Naive thymus-derived CD4-positive, alpha-beta T cell (primary cell): ENCODE measurements at regions of chr19 and their contacts with region 1.

Region 1: GRCh38 chr19:18521885-18522624 is at the start of gene ELL:
- DNase-seq: peak; percentile 99 to 100 (median 100)
- ATAC-seq: peak; percentile 92
- H3K4me3 ChIP-seq: peak within 1 kb of the TSS; percentile 89
- H3K4me3 Mint-ChIP-seq: peak within 1 kb of the TSS; percentile 87 to 99 (median 94)
- H3K27ac ChIP-seq: peak within 1 kb of the TSS; percentile 94
- H3K27ac Mint-ChIP-seq: peak within 1 kb of the TSS; percentile 89 to 98 (median 95)
- H3K4me1 ChIP-seq: peaks cover 5 to 10% of the 10 kb centered on the region in 2 donors
- H3K4me1 Mint-ChIP-seq: peaks cover 0 to 24% (median 17%) of the 10 kb centered on the region in 7 donors
- H3K27me3 ChIP-seq: no peaks in the 10 kb centered on the region
- H3K27me3 Mint-ChIP-seq: no peaks in the 10 kb centered on the region
- total RNA-seq, gene ELL: 18.9 to 70.4 (median 25.0) TPM

Region 2: DNA sequence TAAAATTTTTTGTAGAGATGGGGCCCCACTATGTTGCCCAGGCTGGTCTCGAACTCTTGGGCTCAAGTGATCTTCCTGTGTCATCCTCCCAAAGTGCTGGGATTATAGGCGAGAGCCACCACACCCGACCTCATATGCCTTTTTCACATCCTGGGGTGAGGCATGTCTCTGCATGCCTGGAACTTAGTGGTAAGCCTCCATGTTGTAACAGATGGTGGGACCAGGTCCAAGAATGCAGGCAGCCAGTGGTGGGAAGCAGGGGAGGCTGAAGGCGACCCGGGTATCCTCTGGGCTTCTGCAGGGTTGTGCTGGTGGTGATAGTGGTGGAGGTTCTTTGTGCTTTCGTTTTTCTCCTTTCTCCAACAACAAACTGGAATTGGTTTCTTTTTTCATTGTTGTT is 619.4 kb before region 1 on chr19:
- CTCF ChIA-PET with region 1: no interaction called
- POLR2A ChIA-PET with region 1: no interaction called
- intact Hi-C with region 1: no loop called
- DNase-seq: no peak
- ATAC-seq: no peak
- H3K4me3 ChIP-seq: no peak overlapping the region
- H3K4me3 Mint-ChIP-seq: no peak overlapping the region
- H3K27ac ChIP-seq: no peak overlapping the region
- H3K27ac Mint-ChIP-seq: no peak overlapping the region
- H3K4me1 ChIP-seq: no peaks in the 10 kb centered on the region
- H3K4me1 Mint-ChIP-seq: peaks cover 0 to 4% (median 0%) of the 10 kb centered on the region in 7 donors
- H3K27me3 ChIP-seq: no peaks in the 10 kb centered on the region
- H3K27me3 Mint-ChIP-seq: peaks cover 0 to 20% (median 14%) of the 10 kb centered on the region in 5 donors

Region 3: GRCh38 chr19:18117692-18118378 is 404.2 kb before region 1 on chr19:
- CTCF ChIA-PET with region 1: no interaction called
- POLR2A ChIA-PET with region 1: no interaction called
- intact Hi-C with region 1: loop called in 1 of 2 experiments (anchors 10 kb)
- DNase-seq: peak; percentile 90 to 99 (median 95)
- ATAC-seq: peak; percentile 94
- H3K4me3 ChIP-seq: peak overlapping the region; percentile 71
- H3K4me3 Mint-ChIP-seq: peak overlapping the region; percentile 82 to 96 (median 90)
- H3K27ac ChIP-seq: peak overlapping the region; percentile 80
- H3K27ac Mint-ChIP-seq: peak overlapping the region; percentile 84 to 99 (median 96)
- H3K4me1 ChIP-seq: peaks cover 22 to 24% of the 10 kb centered on the region in 2 donors
- H3K4me1 Mint-ChIP-seq: peaks cover 24 to 47% (median 37%) of the 10 kb centered on the region in 7 donors
- H3K27me3 ChIP-seq: no peaks in the 10 kb centered on the region
- H3K27me3 Mint-ChIP-seq: no peaks in the 10 kb centered on the region

Region 4: GRCh38 chr19:18542936-18543815 is 21.1 kb after region 1 on chr19 and contains the start of gene FKBP8:
- CTCF ChIA-PET with region 1: interaction called, 9 read pairs
- POLR2A ChIA-PET with region 1: interaction called, 10 read pairs
- intact Hi-C with region 1: loop called (anchors 1 kb)
- DNase-seq: peak; percentile 84 to 95 (median 91)
- ATAC-seq: peak; percentile 97
- H3K4me3 ChIP-seq: peak within 1 kb of the TSS; percentile 68
- H3K4me3 Mint-ChIP-seq: peak within 1 kb of the TSS; percentile 90 to 99 (median 94)
- H3K27ac ChIP-seq: peak within 1 kb of the TSS; percentile 87
- H3K27ac Mint-ChIP-seq: peak within 1 kb of the TSS; percentile 89 to 100 (median 97)
- H3K4me1 ChIP-seq: peaks cover 15 to 16% of the 10 kb centered on the region in 2 donors
- H3K4me1 Mint-ChIP-seq: peaks cover 14 to 31% (median 26%) of the 10 kb centered on the region in 7 donors
- H3K27me3 ChIP-seq: no peaks in the 10 kb centered on the region
- H3K27me3 Mint-ChIP-seq: no peaks in the 10 kb centered on the region
- total RNA-seq, gene FKBP8: 137 to 241 (median 221) TPM

Region 5: GRCh38 chr19:18636183-18636968 is 114.3 kb after region 1 on chr19:
- CTCF ChIA-PET with region 1: no interaction called
- POLR2A ChIA-PET with region 1: no interaction called
- intact Hi-C with region 1: loop called (anchors 1 kb)
- DNase-seq: peak; percentile 97 to 100 (median 98)
- ATAC-seq: peak; percentile 95
- H3K4me3 ChIP-seq: peak overlapping the region; percentile 77
- H3K4me3 Mint-ChIP-seq: peak overlapping the region; percentile 71 to 100 (median 88)
- H3K27ac ChIP-seq: peak overlapping the region; percentile 88
- H3K27ac Mint-ChIP-seq: peak overlapping the region; percentile 70 to 96 (median 87)
- H3K4me1 ChIP-seq: peaks cover 6 to 19% of the 10 kb centered on the region in 2 donors
- H3K4me1 Mint-ChIP-seq: peaks cover 23 to 48% (median 36%) of the 10 kb centered on the region in 7 donors
- H3K27me3 ChIP-seq: no peaks in the 10 kb centered on the region
- H3K27me3 Mint-ChIP-seq: peaks cover 0 to 18% (median 3%) of the 10 kb centered on the region in 5 donors

Region 6: GRCh38 chr19:18831524-18832305 is 309.7 kb after region 1 on chr19 and contains the start of gene UPF1:
- CTCF ChIA-PET with region 1: interaction called, 4 read pairs
- POLR2A ChIA-PET with region 1: interaction called, 4 read pairs
- intact Hi-C with region 1: loop called in 1 of 2 experiments (anchors 1 kb)
- DNase-seq: peak; percentile 92 to 99 (median 96)
- ATAC-seq: peak; percentile 93
- H3K4me3 ChIP-seq: peak within 1 kb of the TSS; percentile 95
- H3K4me3 Mint-ChIP-seq: peak within 1 kb of the TSS; percentile 89 to 97 (median 92)
- H3K27ac ChIP-seq: peak within 1 kb of the TSS; percentile 90
- H3K27ac Mint-ChIP-seq: peak within 1 kb of the TSS; percentile 83 to 96 (median 90)
- H3K4me1 ChIP-seq: peaks cover 17 to 23% of the 10 kb centered on the region in 2 donors
- H3K4me1 Mint-ChIP-seq: peaks cover 36 to 42% (median 39%) of the 10 kb centered on the region in 7 donors
- H3K27me3 ChIP-seq: no peaks in the 10 kb centered on the region
- H3K27me3 Mint-ChIP-seq: peaks cover 0 to 18% (median 6%) of the 10 kb centered on the region in 5 donors
- total RNA-seq, gene UPF1: 98.7 to 148 (median 113) TPM

Region 7: DNA sequence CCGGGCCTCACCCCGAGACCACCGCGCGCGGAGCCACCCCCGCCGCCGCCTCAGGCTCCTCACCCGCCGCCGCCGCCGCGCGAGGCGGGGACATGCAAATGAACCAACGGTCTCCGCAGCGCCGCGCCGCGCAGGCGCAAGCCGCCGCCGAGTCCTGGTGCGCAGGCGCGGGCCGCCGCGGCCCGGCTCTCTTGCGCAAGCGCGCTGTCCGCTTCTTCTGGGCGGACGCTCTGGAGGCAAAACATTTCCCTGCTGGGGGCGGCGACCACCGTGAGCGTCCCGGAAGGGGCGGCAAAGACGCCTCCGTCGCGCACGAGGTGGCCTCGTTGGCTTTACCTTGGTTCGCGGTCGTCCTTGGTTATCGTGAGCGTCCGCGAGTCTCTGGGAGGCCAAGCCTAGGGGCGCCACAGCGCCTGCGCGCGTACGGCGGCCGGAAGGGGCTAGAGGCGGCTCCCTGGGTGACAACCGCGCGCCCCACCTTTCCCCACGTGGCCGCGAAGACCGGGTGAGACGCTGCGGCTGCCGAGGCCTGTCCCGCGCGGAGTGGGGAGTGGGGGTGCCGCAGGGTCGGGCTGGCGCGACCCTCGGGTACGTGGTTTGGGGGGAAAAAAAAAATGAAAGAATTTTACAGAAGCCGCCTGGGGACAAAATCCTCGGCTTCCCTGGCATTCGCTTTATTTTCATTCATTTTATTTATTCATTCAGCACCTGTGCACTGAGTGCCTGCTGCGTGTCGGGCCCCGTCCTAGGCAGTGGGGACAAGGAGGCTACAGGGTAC is 511.6 kb after region 1 on chr19 and contains the starts of genes ARMC6 and SUGP2:
- CTCF ChIA-PET with region 1: no interaction called
- POLR2A ChIA-PET with region 1: no interaction called
- intact Hi-C with region 1: loop called in 1 of 2 experiments (anchors 2 kb)
- DNase-seq: peak; percentile 84 to 96 (median 94)
- ATAC-seq: peak; percentile 87
- H3K4me3 ChIP-seq: peak within 1 kb of the TSS; percentile 84
- H3K4me3 Mint-ChIP-seq: peak within 1 kb of the TSS; percentile 88 to 100 (median 96)
- H3K27ac ChIP-seq: peak within 1 kb of the TSS; percentile 86
- H3K27ac Mint-ChIP-seq: peak within 1 kb of the TSS; percentile 86 to 100 (median 94)
- H3K4me1 ChIP-seq: peaks cover 14 to 16% of the 10 kb centered on the region in 2 donors
- H3K4me1 Mint-ChIP-seq: peaks cover 16 to 40% (median 36%) of the 10 kb centered on the region in 7 donors
- H3K27me3 ChIP-seq: no peaks in the 10 kb centered on the region
- H3K27me3 Mint-ChIP-seq: no peaks in the 10 kb centered on the region
- total RNA-seq, gene ARMC6: 14.0 to 32.6 (median 15.0) TPM
- total RNA-seq, gene SUGP2: 116 to 145 (median 129) TPM